A549 (cell line): ENCODE measurements at regions of chr7 and their contacts with region 1.

Region 1: GRCh38 chr7:27745064-27745583 is 5.2 kb downstream of the TAX1BP1 start:
- DNase-seq: peak; percentile 67 to 90
- ATAC-seq: peak; percentile 81 to 86
- H3K4me3 ChIP-seq: no peak overlapping the region; the same call in 2 of the 3 replicates
- H3K27ac ChIP-seq: peak overlapping the region; percentile 61 to 72
- H3K4me1 ChIP-seq: peaks cover 58% of the 10 kb centered on the region
- CTCF ChIP-seq: peak; percentile 88
- EP300 ChIP-seq: no peak
- POLR2A ChIP-seq: no peak
- RAD21 ChIP-seq: peak; percentile 85 to 89

Region 2: DNA sequence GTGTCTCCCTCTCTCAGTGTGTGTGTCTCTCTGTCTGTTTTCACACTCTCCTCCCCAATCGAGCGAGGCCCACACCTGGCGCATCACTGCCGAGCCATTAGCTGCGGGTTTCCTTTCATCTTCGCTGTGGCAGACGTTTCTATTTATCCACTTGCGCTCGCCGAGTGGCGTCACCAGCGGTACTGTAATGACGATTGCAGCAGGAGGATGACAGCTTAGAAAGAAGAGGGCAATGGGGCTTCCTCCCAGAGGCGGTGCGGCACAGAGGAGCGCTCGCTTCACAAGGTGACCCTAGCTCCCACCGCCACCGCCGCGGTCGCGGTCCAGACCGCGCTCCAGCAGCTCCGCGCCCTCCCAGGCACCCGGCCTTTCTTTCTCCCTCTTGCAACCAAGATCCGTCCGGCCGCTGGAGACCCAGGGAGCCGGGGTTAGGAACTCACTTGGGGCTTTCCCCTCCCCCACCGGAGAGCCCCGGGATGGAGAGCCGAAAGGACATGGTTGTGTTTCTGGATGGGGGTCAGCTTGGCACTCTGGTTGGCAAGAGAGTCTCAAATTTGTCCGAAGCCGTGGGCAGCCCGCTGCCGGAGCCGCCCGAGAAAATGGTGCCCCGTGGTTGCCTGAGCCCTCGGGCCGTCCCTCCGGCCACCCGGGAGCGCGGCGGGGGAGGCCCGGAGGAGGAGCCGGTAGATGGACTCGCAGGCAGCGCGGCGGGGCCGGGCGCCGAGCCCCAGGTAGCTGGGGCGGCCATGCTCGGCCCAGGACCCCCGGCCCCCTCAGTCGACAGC is 502.4 kb before region 1 on chr7 and contains the start of gene EVX1:
- CTCF ChIA-PET with region 1: no interaction called
- POLR2A ChIA-PET with region 1: no interaction called
- DNase-seq: peak in 1 of 2 experiments; percentile 13
- ATAC-seq: peak; percentile 32 to 46; a peak in 3 of 6 replicates
- H3K4me3 ChIP-seq: peak within 1 kb of the TSS; percentile 47
- H3K27ac ChIP-seq: peak within 1 kb of the TSS in 1 of 2 experiments; percentile 62; a peak in 4 of 6 replicates
- H3K4me1 ChIP-seq: no peaks in the 10 kb centered on the region
- CTCF ChIP-seq: no peak
- EP300 ChIP-seq: no peak
- POLR2A ChIP-seq: no peak
- RAD21 ChIP-seq: no peak
- polyA plus RNA-seq, gene EVX1: 0.05 and 0.07 TPM in 2 replicates

Region 3: DNA sequence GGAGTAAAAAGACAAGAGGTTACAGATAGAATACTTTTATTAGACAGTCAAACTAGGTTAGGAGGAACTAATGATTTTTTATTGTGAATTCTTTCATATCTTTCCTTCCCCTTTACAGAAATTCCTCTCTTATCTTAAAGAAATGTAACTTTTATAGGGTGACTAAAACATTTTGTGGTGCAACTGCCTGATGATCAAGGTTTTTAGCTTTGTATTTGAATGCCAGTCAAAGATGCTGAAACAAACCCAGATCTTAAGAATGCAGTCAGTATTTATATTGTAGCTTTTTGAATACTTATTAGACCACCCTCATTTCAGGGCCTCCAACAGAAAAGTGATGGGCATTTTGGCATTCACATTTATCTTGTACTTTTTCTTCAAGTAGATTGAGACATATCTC is 22.2 kb after region 1 on chr7:
- CTCF ChIA-PET with region 1: interaction called, 29 read pairs
- POLR2A ChIA-PET with region 1: interaction called, 3 read pairs
- DNase-seq: peak in 1 of 2 experiments; percentile 27
- ATAC-seq: no peak
- H3K4me3 ChIP-seq: no peak overlapping the region
- H3K27ac ChIP-seq: no peak overlapping the region; a peak in 1 of 6 replicates
- H3K4me1 ChIP-seq: peaks cover 71% of the 10 kb centered on the region
- CTCF ChIP-seq: no peak
- EP300 ChIP-seq: peak in 1 of 2 experiments; percentile 52; a peak in 1 of 5 replicates
- POLR2A ChIP-seq: no peak
- RAD21 ChIP-seq: no peak

Region 4: GRCh38 chr7:27774717-27775328 is 29.7 kb after region 1 on chr7:
- CTCF ChIA-PET with region 1: interaction called, 29 read pairs
- POLR2A ChIA-PET with region 1: interaction called, 7 read pairs
- DNase-seq: peak in 1 of 2 experiments; percentile 55
- ATAC-seq: peak in 1 of 2 experiments; percentile 67; a peak in 3 of 6 replicates
- H3K4me3 ChIP-seq: no peak overlapping the region
- H3K27ac ChIP-seq: no peak overlapping the region
- H3K4me1 ChIP-seq: peaks cover 26% of the 10 kb centered on the region
- CTCF ChIP-seq: peak; percentile 88
- EP300 ChIP-seq: no peak
- POLR2A ChIP-seq: no peak
- RAD21 ChIP-seq: peak; percentile 84 to 88

Region 5: GRCh38 chr7:27901028-27901760 is 156.1 kb after region 1 on chr7:
- CTCF ChIA-PET with region 1: no interaction called
- POLR2A ChIA-PET with region 1: no interaction called
- DNase-seq: no peak
- ATAC-seq: peak in 1 of 2 experiments; percentile 49; a peak in 2 of 6 replicates
- H3K4me3 ChIP-seq: no peak overlapping the region
- H3K27ac ChIP-seq: 0 out of 6 replicates have a peak overlapping the region, but pooled peaks of 1 of the 2 experiments have one; percentile 17
- H3K4me1 ChIP-seq: no peaks in the 10 kb centered on the region
- CTCF ChIP-seq: no peak
- EP300 ChIP-seq: no peak
- POLR2A ChIP-seq: no peak
- RAD21 ChIP-seq: no peak

Region 6: GRCh38 chr7:27921081-27921836 is 176.1 kb after region 1 on chr7:
- CTCF ChIA-PET with region 1: interaction called, 16 read pairs
- POLR2A ChIA-PET with region 1: interaction called, 4 read pairs
- DNase-seq: peak; percentile 49 to 82
- ATAC-seq: peak; percentile 79 to 90
- H3K4me3 ChIP-seq: 0 out of 3 replicates have a peak overlapping the region, but pooled peaks have one; percentile 1
- H3K27ac ChIP-seq: peak overlapping the region; percentile 43 to 71; a peak in 5 of 6 replicates
- H3K4me1 ChIP-seq: peaks cover 37% of the 10 kb centered on the region
- CTCF ChIP-seq: peak; percentile 84
- EP300 ChIP-seq: no peak
- POLR2A ChIP-seq: no peak
- RAD21 ChIP-seq: peak; percentile 88 to 94